Aorta (tissue), 5 donors: ENCODE measurements at regions of chr22 and their contacts with region 1.

Region 1: GRCh38 chr22:24423519-24424000 is 3.8 kb upstream of the ADORA2A start:
- DNase-seq: peak; percentile 76 to 91
- ATAC-seq: peak; percentile 75
- H3K4me3 ChIP-seq: peak overlapping the region in 1 of 2 donors; percentile 17
- H3K27ac ChIP-seq: no peak overlapping the region
- H3K4me1 ChIP-seq: no peaks in the 10 kb centered on the region
- H3K27me3 ChIP-seq: no peaks in the 10 kb centered on the region

Region 2: GRCh38 chr22:24503137-24503842 is 79.7 kb after region 1 on chr22:
- intact Hi-C with region 1: loop called in 1 of 2 experiments (anchors 5 kb)
- DNase-seq: peak in 1 of 2 donors; percentile 85
- ATAC-seq: peak; percentile 67
- H3K4me3 ChIP-seq: no peak overlapping the region
- H3K27ac ChIP-seq: no peak overlapping the region
- H3K4me1 ChIP-seq: no peaks in the 10 kb centered on the region
- H3K27me3 ChIP-seq: no peaks in the 10 kb centered on the region

Region 3: DNA sequence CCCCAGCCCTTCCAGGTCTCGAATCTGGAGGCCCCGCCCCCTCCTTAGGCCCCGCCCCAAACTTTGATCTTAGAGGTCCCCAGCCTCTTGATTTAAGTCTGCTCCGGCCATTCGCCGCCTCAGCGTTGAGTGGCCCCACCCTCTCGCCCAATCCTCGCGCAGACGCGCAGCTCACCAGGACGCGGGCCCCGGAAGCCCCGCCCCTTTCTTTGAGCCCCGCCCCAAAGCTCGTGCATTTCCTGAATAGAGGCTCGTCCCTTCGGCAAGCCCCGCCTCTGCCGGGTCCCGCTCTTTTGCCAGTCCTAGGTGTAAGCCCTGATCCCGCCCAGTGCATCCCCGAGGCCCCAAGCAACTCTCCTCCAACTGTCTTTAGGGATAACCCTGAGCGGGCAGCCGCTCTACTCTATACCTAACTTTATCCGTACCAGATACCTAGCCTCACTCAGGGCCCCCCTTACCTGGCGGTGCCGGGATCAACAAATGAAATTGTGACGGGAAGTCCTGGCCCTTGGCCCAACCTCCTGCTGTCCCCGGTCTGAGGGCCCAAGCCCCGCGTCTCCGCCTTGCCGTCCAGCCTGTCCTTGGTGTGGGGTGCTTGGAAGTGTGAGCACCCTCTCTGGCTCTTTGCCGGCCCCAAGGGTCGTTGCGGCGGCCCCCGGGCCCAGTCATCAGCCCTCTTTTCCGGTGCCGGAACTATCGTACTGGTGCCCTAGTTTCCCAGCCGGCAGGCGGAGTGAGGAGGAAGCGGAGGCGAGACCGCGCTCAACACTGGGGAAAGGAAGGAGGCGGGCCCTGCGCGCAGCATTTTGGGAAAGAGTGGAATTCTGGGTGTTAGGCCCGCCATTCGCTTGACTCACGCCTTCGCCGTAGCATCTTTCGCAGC is 131.8 kb after region 1 on chr22 and contains the start of gene SNRPD3:
- intact Hi-C with region 1: no loop called
- DNase-seq: peak; percentile 100
- ATAC-seq: peak; percentile 97
- H3K4me3 ChIP-seq: peak within 1 kb of the TSS; percentile 72 to 83
- H3K27ac ChIP-seq: peak within 1 kb of the TSS; percentile 32 to 94
- H3K4me1 ChIP-seq: peaks cover 4 to 5% of the 10 kb centered on the region in 2 donors
- H3K27me3 ChIP-seq: no peaks in the 10 kb centered on the region
- total RNA-seq, gene SNRPD3: 43.4 to 44.8 TPM

Region 4: DNA sequence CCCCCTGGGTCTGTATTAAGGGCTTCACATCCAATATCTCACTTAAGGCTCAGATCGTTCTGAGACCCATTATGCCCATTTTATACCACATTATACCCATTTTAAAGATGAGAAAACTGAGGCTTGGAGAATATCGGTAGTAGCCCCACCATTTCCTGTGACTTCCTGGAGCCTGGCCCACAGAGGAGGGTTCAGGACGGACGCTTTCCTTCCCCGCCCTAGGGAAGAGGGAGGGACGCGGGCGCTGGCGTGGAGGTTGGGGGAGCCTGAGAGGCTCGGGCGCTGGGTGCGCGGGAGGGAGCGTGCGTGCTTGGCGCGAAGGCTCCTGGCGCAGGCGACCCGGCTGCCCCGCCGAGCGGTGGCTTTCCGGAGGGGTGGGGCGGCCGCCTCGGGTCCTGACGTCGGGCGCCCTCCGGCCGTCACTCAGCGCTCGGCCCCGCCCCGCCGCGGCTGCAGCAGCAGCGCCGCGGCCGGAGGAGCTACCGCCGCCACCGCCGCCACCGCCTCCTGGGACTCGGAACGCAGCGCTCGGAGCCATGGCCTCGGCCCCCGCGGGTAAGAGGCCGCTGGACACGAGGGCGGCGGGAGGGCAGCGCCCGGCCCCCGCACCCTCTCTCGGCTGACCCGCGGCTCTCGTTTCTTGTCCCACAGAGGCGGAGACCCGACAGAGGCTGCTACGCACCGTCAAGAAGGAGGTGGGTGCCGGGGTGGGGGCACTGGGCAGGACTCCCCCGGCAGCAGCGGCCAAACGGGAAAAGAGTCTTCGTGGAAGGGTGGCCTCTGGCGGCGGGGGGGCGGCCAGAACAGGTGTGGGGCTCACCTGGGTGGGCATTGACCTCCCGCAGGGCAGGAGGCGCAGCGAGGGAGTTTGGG is 382.5 kb after region 1 on chr22 and contains the start of gene SGSM1:
- intact Hi-C with region 1: no loop called
- DNase-seq: peak; percentile 89 to 94
- ATAC-seq: peak; percentile 83
- H3K4me3 ChIP-seq: peak within 1 kb of the TSS; percentile 55 to 58
- H3K27ac ChIP-seq: peak within 1 kb of the TSS; percentile 15 to 79
- H3K4me1 ChIP-seq: no peaks in the 10 kb centered on the region
- H3K27me3 ChIP-seq: no peaks in the 10 kb centered on the region
- total RNA-seq, gene SGSM1: 9.2 to 9.5 TPM